Naive thymus-derived CD4-positive, alpha-beta T cell (primary cell): ENCODE measurements at regions of chr3 and their contacts with region 1.

Region 1: DNA sequence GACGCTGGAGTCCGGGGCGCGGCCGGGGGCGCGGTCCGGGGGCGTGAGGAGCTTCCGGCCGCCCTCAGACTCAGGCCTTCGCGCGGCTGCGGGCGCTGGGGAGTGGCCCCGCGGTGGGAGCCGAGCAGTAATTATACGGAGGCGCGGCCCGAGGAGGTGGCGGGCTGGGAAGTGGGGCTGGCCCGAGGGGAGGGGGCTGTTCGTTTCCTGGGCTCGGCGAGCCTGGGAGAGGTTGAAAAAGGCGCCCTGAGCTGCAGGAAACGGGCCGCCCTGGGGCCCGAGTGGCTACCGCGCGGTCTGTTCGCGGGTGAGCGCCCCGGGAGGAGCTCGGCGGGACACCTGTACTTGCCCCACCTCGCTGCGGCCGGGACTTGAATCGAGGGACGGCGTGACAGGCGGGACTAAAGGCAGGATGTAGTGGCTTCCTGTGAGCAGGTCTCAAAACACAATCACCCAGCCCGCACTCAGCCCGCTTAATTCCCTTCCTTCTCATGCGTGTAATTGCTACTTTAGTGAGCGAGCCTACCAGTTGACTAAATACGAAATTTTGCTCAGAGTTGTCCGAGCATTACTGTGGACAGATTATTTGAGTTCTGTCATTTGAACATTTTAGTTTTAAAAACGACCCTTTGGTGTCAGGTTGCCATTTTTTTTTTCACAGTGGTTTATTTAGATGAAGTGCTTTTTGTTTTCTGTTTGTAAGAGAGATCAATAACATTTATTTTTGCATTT is 860 bp downstream of the RASA2 start:
- DNase-seq: peak in 8 of 9 donors; percentile 65 to 88 (median 86)
- ATAC-seq: peak; percentile 71
- H3K4me3 ChIP-seq: peak overlapping the region; percentile 65
- H3K4me3 Mint-ChIP-seq: peak overlapping the region; percentile 89 to 97 (median 92)
- H3K27ac ChIP-seq: peak overlapping the region; percentile 94
- H3K27ac Mint-ChIP-seq: peak overlapping the region; percentile 90 to 97 (median 93)
- H3K4me1 ChIP-seq: peaks cover 62% of the 10 kb centered on the region in 2 donors
- H3K4me1 Mint-ChIP-seq: peaks cover 53 to 83% (median 74%) of the 10 kb centered on the region in 7 donors
- H3K27me3 ChIP-seq: no peaks in the 10 kb centered on the region
- H3K27me3 Mint-ChIP-seq: no peaks in the 10 kb centered on the region

Region 2: GRCh38 chr3:141477224-141477623 is 10.5 kb before region 1 on chr3:
- CTCF ChIA-PET with region 1: interaction called, 3 read pairs
- POLR2A ChIA-PET with region 1: interaction called, 11 read pairs
- intact Hi-C with region 1: loop called (anchors 1 kb)
- DNase-seq: no peak
- ATAC-seq: no peak
- H3K4me3 ChIP-seq: no peak overlapping the region
- H3K4me3 Mint-ChIP-seq: no peak overlapping the region
- H3K27ac ChIP-seq: no peak overlapping the region
- H3K27ac Mint-ChIP-seq: no peak overlapping the region
- H3K4me1 ChIP-seq: peaks cover 11% of the 10 kb centered on the region in 2 donors
- H3K4me1 Mint-ChIP-seq: peaks cover 24 to 46% (median 32%) of the 10 kb centered on the region in 7 donors
- H3K27me3 ChIP-seq: no peaks in the 10 kb centered on the region
- H3K27me3 Mint-ChIP-seq: peaks cover 0 to 21% (median 0%) of the 10 kb centered on the region in 5 donors

Region 3: DNA sequence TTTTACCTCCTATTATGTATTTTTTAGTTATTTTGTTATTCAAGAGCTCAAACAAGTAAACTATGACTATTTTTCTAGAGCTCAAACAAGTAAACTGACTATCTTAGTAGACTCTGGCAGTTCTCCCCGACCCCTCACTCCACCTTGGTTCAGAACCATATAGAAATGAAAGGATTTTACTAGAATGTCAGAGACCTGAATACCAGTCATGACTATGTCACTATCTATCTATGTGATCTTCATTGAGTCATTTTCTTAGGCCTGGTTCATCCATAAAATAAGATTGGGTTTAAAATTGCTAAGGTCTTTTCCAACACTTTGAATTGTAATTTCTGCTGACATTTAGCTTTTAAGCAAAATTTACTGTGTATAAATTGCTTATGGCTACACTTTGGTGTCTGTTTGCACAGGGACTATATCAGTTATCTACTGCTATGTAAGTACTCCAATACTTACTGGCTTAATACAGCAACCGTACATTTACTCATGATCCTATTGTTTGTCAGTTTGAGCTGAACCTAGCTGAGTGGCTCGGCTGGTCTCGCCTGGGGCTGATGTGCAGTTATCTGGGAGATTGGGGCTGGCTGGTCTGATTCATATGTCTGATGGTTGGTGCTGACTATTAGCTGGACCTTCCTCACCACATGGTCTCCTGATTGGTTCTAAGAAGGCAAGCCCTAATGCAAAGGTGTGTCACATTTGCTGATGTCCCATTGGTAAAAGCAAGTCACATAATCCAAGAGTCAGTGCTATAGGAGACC is 36.1 kb after region 1 on chr3:
- CTCF ChIA-PET with region 1: no interaction called
- POLR2A ChIA-PET with region 1: interaction called, 10 read pairs
- intact Hi-C with region 1: loop called in 1 of 2 experiments (anchors 2 kb)
- DNase-seq: no peak
- ATAC-seq: no peak
- H3K4me3 ChIP-seq: no peak overlapping the region
- H3K4me3 Mint-ChIP-seq: peak overlapping the region in 6 of 10 donors; percentile 3 to 74 (median 27)
- H3K27ac ChIP-seq: no peak overlapping the region
- H3K27ac Mint-ChIP-seq: peak overlapping the region in 8 of 9 donors; percentile 76 to 93 (median 87)
- H3K4me1 ChIP-seq: peaks cover 12 to 47% of the 10 kb centered on the region in 2 donors
- H3K4me1 Mint-ChIP-seq: peaks cover 38 to 97% (median 85%) of the 10 kb centered on the region in 7 donors
- H3K27me3 ChIP-seq: no peaks in the 10 kb centered on the region
- H3K27me3 Mint-ChIP-seq: no peaks in the 10 kb centered on the region

Region 4: DNA sequence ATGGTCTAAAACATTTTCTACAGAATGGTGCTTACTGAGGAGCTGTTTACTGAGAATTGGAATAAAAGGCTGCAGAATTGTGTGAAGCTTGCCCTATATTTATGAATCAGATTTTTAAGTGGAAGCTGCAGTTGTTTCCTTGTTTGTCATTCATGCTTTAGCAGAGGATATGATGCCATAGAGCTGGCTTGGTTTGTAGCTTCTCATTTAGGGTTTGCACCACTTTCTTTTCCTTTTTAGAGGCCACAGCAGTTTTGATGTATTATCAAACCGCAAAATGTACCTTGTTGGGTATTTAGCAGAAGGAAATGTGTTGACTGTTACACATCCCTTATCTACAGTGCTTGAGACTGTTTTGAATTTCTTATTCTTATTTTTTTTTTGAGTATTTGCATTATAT is 65.4 kb after region 1 on chr3:
- CTCF ChIA-PET with region 1: interaction called, 3 read pairs
- POLR2A ChIA-PET with region 1: interaction called, 34 read pairs
- intact Hi-C with region 1: loop called (anchors 1 to 2 kb)
- DNase-seq: peak in 7 of 9 donors; percentile 60 to 88 (median 78)
- ATAC-seq: peak; percentile 93
- H3K4me3 ChIP-seq: peak overlapping the region; percentile 12
- H3K4me3 Mint-ChIP-seq: peak overlapping the region in 9 of 10 donors; percentile 15 to 74 (median 53)
- H3K27ac ChIP-seq: peak overlapping the region; percentile 59
- H3K27ac Mint-ChIP-seq: peak overlapping the region; percentile 32 to 90 (median 77)
- H3K4me1 ChIP-seq: peaks cover 24 to 73% of the 10 kb centered on the region in 2 donors
- H3K4me1 Mint-ChIP-seq: peaks cover 36 to 72% (median 63%) of the 10 kb centered on the region in 7 donors
- H3K27me3 ChIP-seq: no peaks in the 10 kb centered on the region
- H3K27me3 Mint-ChIP-seq: no peaks in the 10 kb centered on the region

Region 5: GRCh38 chr3:142578327-142579223 is 1090.9 kb after region 1 on chr3 and contains the start of gene ATR:
- CTCF ChIA-PET with region 1: no interaction called
- POLR2A ChIA-PET with region 1: no interaction called
- intact Hi-C with region 1: loop called in 1 of 2 experiments (anchors 1 kb)
- DNase-seq: peak; percentile 89 to 96 (median 95)
- ATAC-seq: peak; percentile 96
- H3K4me3 ChIP-seq: peak within 1 kb of the TSS; percentile 97
- H3K4me3 Mint-ChIP-seq: peak within 1 kb of the TSS; percentile 93 to 99 (median 97)
- H3K27ac ChIP-seq: peak within 1 kb of the TSS; percentile 94
- H3K27ac Mint-ChIP-seq: peak within 1 kb of the TSS; percentile 96 to 99 (median 98)
- H3K4me1 ChIP-seq: peaks cover 25 to 26% of the 10 kb centered on the region in 2 donors
- H3K4me1 Mint-ChIP-seq: peaks cover 45 to 60% (median 54%) of the 10 kb centered on the region in 7 donors
- H3K27me3 ChIP-seq: no peaks in the 10 kb centered on the region
- H3K27me3 Mint-ChIP-seq: peaks cover 0 to 20% (median 0%) of the 10 kb centered on the region in 5 donors
- total RNA-seq, gene ATR: 31.3 to 48.3 (median 36.2) TPM